Mammary epithelial cell (primary cell): ENCODE measurements at regions of chr18 and their contacts with region 1.

Region 1: DNA sequence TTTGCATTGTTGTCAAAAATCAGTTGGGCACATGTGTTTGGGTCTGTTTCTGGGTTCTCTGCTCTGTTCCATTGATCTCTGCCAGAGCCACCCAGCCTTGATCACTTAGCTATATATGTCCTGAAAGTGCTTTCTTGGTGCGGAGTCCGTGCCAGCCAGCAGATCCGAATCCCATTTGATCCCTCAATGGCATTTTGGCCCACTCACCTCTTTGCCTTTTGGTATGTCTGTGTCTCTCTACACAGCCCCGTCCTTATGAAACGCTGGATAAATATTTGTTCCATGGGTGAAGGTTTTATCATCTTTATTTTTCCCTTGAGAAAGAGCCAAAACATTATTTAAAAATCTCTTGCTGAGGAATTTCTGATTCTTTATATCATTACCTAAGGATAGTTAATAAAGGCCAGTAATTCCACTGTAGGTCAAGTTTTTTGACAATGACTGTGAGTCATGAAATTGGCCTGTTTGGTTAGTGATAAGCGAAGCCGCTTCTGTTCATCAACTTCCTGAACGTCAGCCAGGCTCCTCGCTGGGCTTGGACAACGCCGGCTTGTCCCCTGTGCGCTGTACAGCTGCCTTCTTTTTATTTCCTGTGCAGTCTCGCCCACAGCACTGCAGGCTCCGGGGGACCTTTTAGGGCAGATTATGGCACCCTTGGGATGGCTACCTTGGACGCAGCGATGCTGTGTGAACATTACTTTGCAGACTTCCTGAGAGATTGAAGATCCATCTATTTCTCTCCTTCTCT is 24.9 kb downstream of the MTCL1 start:
- DNase-seq: no peak
- H3K4me3 ChIP-seq: no peak overlapping the region
- H3K27ac ChIP-seq: no peak overlapping the region
- H3K4me1 ChIP-seq: no peaks in the 10 kb centered on the region
- H3K27me3 ChIP-seq: no peaks in the 10 kb centered on the region
- CTCF ChIP-seq: no peak

Region 2: GRCh38 chr18:8526332-8526731 is 203.9 kb before region 1 on chr18:
- CTCF ChIA-PET with region 1: no interaction called
- dilution Hi-C with region 1: no loop called
- in situ Hi-C with region 1: no loop called
- intact Hi-C with region 1: no loop called
- DNase-seq: no peak
- H3K4me3 ChIP-seq: no peak overlapping the region
- H3K27ac ChIP-seq: no peak overlapping the region
- H3K4me1 ChIP-seq: no peaks in the 10 kb centered on the region
- H3K27me3 ChIP-seq: no peaks in the 10 kb centered on the region
- CTCF ChIP-seq: no peak

Region 3: DNA sequence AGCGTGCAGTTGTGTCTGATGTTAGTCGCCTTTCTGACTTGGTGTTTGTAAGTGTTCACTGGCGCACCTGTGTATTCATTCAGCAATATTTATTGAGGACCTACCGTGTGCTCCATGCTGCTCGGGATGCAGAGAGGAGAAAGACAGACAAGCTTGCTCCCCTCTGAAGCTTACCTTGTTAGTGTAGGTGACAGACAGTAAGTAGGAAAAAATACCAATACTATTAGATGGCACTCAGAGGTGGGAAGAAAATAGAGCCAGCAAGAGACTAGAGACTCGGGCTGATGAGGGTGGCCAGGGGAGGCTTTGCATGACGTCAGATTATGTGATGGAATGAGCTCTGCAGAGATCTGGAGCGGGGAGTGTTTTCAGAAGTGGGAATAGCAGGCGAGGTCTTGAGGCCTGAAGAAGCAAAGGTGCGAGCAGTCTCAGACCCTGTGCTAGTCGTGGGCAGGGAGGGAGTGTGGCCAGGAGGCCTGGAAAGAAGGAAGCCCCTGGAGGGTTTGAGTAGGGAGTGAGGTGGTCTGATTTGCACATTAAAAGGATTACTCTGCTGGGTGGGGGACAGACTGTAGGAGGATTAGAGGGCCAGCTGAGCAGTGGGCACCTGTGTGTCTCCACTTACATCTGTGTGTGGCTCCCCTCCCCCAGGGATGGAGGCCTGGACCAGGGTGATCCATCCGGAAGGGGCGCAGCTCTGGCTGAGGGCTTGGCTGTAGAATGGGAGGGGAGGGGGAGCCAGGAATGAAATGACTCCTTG is 13.1 kb before region 1 on chr18:
- CTCF ChIA-PET with region 1: no interaction called
- dilution Hi-C with region 1: no loop called
- in situ Hi-C with region 1: no loop called
- intact Hi-C with region 1: no loop called
- DNase-seq: no peak
- H3K4me3 ChIP-seq: no peak overlapping the region
- H3K27ac ChIP-seq: no peak overlapping the region
- H3K4me1 ChIP-seq: peaks cover 10% of the 10 kb centered on the region
- H3K27me3 ChIP-seq: no peaks in the 10 kb centered on the region
- CTCF ChIP-seq: no peak

Region 4: DNA sequence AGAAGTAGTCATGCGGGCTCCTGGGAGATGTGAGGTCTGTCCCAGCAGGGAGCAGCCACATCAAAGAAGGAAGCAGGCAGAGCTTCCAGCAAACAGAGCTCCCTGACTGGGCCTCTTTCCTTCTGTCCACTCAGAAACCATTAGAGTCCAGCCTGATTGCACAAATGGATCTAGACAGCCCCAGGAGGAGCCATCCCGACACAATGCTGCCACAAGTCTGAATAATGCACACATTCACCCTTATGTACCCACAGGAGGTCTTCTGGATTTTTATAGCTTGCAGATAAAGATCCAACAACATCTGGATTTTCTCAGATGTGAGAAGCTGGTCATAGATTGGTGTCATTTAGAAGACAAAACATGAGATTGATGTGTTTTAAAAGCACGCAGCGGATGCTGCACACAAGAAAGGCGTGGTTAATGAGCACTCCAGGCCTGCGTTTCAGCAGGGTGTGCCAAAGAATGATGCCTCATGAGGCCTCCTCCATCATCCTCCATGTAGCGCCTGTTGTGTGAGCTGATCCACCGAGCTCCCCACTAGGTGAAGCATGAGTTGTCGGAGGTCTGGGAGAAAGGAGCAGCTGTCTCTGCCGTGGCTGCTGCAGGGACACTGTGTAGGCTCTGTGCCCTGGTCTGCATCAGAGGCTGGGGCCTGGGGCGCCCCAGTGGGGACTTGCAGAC is 35.7 kb after region 1 on chr18:
- CTCF ChIA-PET with region 1: no interaction called
- dilution Hi-C with region 1: loop called (anchors 5 kb)
- in situ Hi-C with region 1: no loop called
- intact Hi-C with region 1: no loop called
- DNase-seq: no peak
- H3K4me3 ChIP-seq: no peak overlapping the region
- H3K27ac ChIP-seq: no peak overlapping the region
- H3K4me1 ChIP-seq: no peaks in the 10 kb centered on the region
- H3K27me3 ChIP-seq: no peaks in the 10 kb centered on the region
- CTCF ChIP-seq: no peak

Region 5: DNA sequence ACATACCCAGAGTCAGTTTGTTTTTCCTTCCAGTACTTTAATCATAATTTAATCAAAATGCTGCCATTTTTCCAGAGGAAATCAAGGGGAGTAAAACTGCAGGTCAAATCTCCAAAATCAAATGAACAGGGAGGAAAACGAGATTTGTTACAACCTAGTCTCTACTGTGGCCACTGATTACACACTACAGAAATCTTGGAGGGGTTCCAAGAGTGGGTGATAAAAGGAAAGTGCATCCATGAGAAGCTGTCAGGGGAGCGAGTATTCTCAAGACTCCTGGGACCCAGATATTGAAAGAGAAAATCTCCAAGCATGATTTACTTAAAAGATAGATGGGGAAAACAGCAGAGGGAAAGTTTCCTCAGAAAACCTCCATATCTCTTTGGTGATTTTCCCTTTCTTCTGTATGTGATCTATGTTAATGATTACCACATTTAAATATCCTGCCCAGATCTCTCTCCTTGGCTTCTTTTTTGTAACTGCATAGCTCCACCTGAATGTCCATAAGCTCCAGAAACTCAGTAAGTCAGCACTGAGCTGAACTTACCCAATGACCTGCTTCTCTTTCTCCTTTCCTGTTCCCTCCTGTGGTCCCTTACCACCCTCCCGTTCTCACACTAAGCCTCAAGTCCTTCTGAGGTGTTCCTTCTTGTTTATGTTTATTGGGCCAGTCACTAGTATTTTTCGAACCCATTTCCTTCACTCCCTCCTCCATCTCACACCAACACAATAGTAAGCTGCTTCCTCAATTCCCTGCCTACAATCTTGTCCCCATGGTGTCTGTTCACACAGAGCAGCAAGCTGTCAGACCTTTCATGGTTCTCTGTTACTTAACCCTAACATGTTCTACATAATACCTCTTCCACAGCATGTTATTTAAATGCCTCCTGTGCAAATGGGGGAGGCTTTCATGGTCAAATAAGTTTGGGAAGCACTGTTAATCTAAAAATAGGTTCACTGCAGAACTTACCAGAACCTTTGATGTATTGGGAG is 530.4 kb after region 1 on chr18:
- CTCF ChIA-PET with region 1: no interaction called
- dilution Hi-C with region 1: no loop called
- in situ Hi-C with region 1: no loop called
- intact Hi-C with region 1: no loop called
- DNase-seq: no peak
- H3K4me3 ChIP-seq: no peak overlapping the region
- H3K27ac ChIP-seq: no peak overlapping the region
- H3K4me1 ChIP-seq: no peaks in the 10 kb centered on the region
- H3K27me3 ChIP-seq: no peaks in the 10 kb centered on the region
- CTCF ChIP-seq: no peak